SK-N-SH (cell line): ENCODE measurements at regions of chr12 and their contacts with region 1.

Region 1: DNA sequence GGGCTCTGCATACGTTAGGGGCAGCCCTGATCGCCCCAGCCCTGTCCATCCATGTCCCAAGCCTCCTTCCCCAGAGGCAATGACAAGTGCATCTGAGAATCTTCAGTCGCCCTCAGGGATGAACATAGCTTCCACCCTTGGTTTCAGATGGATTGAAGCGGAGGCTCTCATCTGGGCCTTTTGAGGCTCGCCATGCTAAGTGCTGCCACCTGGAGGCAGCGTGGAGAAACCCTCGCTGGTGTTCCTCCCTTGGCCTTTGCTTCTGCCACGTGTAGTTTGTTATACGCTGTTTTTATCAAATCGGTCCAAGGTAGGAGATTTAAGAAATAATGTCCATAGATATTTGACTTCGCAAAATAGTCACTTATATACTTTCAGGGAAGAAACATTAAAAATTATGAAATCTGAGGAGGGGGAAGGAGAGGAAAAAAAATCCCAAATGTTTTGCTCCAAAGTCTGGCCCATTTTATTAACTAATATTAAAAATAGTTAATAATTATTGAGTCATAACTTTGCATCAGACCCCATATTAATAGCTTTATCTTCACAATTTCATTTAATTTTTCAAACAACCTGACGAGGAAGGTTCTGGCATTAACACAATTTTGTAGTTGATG is 28.8 kb upstream of the LRRC10 start:
- DNase-seq: peak; percentile 73
- H3K4me3 ChIP-seq: no peak overlapping the region
- H3K27ac ChIP-seq: no peak overlapping the region
- H3K4me1 ChIP-seq: peaks cover 0 to 3% of the 10 kb centered on the region in 2 experiments; a peak in 1 of 4 replicates
- H3K27me3 ChIP-seq: no peaks in the 10 kb centered on the region
- CTCF ChIP-seq: peak; percentile 93
- EP300 ChIP-seq: no peak
- RAD21 ChIP-seq: peak; percentile 80

Region 2: DNA sequence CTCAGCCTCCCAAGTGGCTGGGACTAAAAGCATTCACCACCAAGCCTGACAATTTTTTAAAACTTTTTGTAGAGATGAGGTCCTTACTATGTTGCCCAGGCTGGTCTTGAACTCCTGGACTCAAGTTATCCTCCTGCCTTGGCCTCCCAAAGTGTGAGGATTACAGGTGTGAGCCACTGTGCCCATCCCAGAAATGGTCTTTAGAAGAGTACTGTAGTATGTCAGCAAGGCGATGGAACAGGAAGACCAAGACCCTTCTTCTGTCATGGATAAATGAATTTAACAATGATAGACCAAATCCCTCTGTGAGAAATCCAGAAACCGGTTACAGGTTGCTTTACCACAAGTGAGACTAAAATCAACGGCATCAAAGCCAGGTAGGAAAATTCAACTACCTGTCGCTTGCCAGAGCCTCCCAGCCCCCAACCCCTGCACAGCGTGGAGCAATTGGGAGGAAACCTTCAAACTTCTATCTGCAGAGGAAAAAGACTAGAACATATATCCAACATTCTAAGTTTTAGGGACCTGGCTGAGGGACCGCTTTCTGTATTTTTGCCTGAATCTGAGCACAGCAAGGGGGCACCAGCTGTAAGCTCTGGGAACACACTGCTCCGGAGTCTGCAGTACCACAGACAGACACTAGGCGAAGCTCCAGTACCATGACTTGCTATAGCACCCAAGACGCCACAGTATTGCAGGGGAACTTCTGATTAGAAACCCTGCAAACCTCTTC is 348.8 kb before region 1 on chr12:
- CTCF ChIA-PET with region 1: interaction called, 12 read pairs
- POLR2A ChIA-PET with region 1: no interaction called
- DNase-seq: peak; percentile 66
- H3K4me3 ChIP-seq: no peak overlapping the region
- H3K27ac ChIP-seq: no peak overlapping the region
- H3K4me1 ChIP-seq: no peaks in the 10 kb centered on the region
- H3K27me3 ChIP-seq: peaks cover 20% of the 10 kb centered on the region; the same call in 1 of the 2 replicates
- CTCF ChIP-seq: peak; percentile 73
- EP300 ChIP-seq: no peak
- RAD21 ChIP-seq: peak; percentile 89

Region 3: DNA sequence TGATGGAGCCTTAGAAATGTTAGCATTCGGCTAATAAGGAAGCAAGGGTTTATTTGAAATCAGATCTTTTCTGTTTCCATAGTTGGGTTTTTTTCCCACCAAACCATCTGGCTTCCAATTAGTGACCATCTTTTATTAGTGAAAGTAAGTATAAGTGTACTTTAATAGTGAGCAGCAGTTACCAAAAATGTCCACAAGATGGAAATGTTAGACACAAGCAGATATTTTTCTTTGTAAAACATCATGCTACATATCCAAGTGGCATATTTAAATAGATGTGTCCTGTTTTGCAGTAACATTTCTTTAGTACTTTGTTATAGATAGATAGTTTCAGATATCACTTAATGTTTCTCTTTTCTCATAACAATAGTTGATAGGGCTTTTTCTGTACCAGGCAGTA is 251.1 kb before region 1 on chr12:
- CTCF ChIA-PET with region 1: interaction called, 11 read pairs
- POLR2A ChIA-PET with region 1: no interaction called
- DNase-seq: peak; percentile 30
- H3K4me3 ChIP-seq: no peak overlapping the region
- H3K27ac ChIP-seq: peak overlapping the region in 1 of 2 experiments; percentile 10; a peak in 1 of 4 replicates
- H3K4me1 ChIP-seq: peaks cover 0 to 6% of the 10 kb centered on the region in 2 experiments; a peak in 1 of 4 replicates
- H3K27me3 ChIP-seq: no peaks in the 10 kb centered on the region
- CTCF ChIP-seq: peak; percentile 88
- EP300 ChIP-seq: no peak
- RAD21 ChIP-seq: peak; percentile 75

Region 4: DNA sequence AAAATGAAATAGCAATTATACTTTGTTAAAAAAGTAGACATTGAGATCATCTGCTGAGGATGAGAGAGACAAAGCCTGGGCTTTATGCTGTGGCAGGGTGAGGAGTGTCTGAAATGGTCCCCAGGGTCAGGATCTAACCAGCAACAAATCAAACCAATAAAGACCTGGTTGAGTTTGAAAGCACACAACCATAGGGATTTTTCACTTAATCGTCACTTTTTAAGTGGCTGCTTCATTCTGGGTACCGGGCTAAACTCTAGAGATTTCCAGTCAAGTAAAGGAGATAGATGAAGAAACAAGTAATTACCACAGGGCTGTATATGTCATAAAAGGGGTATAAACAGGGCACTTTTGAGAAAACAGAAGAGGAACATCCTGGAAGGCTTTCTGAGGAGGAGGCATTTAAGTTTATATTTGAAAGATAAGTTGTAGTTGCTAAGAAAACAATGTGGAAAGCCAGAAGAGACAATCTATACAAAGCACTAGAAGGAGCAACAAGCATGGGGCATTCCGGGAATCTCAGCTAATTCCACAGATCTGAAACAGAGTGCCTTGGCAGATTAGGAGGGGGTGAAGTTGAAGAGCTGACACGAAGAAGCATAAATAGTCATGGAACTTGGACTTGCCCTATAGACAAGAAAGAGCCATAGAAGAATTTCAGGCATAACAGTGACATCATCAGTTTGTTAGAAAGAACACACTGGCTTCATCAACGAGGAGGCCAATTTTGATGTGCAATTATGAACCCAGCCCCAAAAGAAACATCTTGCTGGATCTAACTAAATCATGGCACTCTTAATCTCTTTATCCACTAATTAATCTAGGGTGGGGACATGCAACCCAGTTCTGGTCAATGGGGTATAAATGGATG is 216.2 kb before region 1 on chr12:
- CTCF ChIA-PET with region 1: no interaction called
- POLR2A ChIA-PET with region 1: no interaction called
- DNase-seq: no peak
- H3K4me3 ChIP-seq: no peak overlapping the region
- H3K27ac ChIP-seq: no peak overlapping the region
- H3K4me1 ChIP-seq: no peaks in the 10 kb centered on the region
- H3K27me3 ChIP-seq: no peaks in the 10 kb centered on the region
- CTCF ChIP-seq: no peak
- EP300 ChIP-seq: no peak
- RAD21 ChIP-seq: no peak

Region 5: DNA sequence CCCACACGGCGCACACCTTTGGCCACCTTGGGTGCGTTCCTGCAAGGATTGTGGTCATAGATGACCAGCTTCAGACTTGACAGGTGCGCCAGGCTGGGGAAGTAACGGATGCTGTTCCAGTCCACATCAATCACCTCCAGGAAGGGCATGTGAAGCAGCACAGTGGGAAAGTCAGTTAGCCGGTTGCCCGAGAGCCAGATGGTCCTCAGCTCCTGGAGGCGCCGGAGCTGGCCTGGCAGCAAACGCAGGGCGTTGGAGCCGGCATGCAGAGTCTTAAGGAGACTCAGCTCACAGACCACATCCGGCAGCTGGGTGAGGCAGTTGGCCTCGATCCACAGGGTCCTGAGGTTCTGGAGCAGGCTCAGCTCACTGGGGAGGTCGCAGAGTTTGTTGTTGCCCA is 29.4 kb before region 1 on chr12:
- CTCF ChIA-PET with region 1: interaction called, 10 read pairs
- POLR2A ChIA-PET with region 1: no interaction called
- DNase-seq: no peak
- H3K4me3 ChIP-seq: no peak overlapping the region
- H3K27ac ChIP-seq: no peak overlapping the region
- H3K4me1 ChIP-seq: no peaks in the 10 kb centered on the region
- H3K27me3 ChIP-seq: no peaks in the 10 kb centered on the region
- CTCF ChIP-seq: no peak
- EP300 ChIP-seq: no peak
- RAD21 ChIP-seq: no peak

Region 6: GRCh38 chr12:69623970-69624369 is 15.5 kb before region 1 on chr12:
- CTCF ChIA-PET with region 1: interaction called, 45 read pairs
- POLR2A ChIA-PET with region 1: no interaction called
- DNase-seq: peak; percentile 80
- H3K4me3 ChIP-seq: no peak overlapping the region
- H3K27ac ChIP-seq: no peak overlapping the region
- H3K4me1 ChIP-seq: peaks cover 0 to 17% of the 10 kb centered on the region in 2 experiments; a peak in 1 of 4 replicates
- H3K27me3 ChIP-seq: peaks cover 8% of the 10 kb centered on the region; the same call in 1 of the 2 replicates
- CTCF ChIP-seq: no peak
- EP300 ChIP-seq: peak in 1 of 2 experiments; percentile 90; a peak in 2 of 4 replicates
- RAD21 ChIP-seq: peak; percentile 27; the same call in 1 of the 2 replicates